Naive thymus-derived CD4-positive, alpha-beta T cell (primary cell): ENCODE measurements at regions of chr12 and their contacts with region 1.

Region 1: DNA sequence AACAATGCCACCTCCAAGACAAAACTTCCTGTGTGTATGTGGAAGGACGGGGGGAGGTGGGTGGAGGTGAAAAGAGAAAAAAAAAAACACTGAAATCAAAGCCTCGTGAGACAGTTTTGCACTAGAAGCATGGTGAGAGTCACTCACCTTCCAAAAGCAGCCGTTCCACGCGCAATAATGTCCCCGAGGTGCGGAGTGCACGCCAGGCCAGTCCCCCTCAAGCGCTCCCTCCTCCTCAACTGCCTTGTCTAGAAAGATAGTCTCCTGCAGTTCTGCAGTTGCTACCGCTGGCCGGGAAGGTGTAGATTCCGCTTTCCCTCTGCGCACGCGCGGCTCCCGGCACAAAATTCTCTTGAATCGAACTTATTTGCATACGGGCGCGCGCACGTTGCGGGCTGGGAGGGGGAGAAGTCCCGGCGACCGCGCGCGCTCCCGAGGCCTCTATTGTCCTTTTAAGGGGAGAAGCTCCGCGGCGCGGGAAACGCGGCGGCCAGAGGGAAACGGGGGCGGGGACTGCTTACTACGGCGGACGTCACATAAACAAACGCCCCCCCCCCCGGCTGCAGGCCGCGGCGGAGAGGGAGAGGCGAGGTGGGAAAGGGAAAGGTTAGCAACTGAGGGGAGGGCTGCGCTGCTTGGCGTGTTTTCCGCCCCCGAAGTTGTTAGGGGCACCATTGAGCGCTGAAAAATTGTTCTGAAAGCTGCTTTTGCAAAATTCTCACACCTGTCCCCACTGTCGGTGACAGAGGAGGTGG is at the start of gene SINHCAF:
- DNase-seq: peak; percentile 97 to 99 (median 98)
- ATAC-seq: peak; percentile 78
- H3K4me3 ChIP-seq: peak within 1 kb of the TSS; percentile 82
- H3K4me3 Mint-ChIP-seq: peak within 1 kb of the TSS; percentile 89 to 99 (median 96)
- H3K27ac ChIP-seq: peak within 1 kb of the TSS; percentile 93
- H3K27ac Mint-ChIP-seq: peak within 1 kb of the TSS; percentile 81 to 99 (median 93)
- H3K4me1 ChIP-seq: peaks cover 5 to 22% of the 10 kb centered on the region in 2 donors
- H3K4me1 Mint-ChIP-seq: peaks cover 20 to 37% (median 26%) of the 10 kb centered on the region in 7 donors
- H3K27me3 ChIP-seq: no peaks in the 10 kb centered on the region
- H3K27me3 Mint-ChIP-seq: peaks cover 0 to 17% (median 0%) of the 10 kb centered on the region in 5 donors
- total RNA-seq, gene SINHCAF: 80.5 to 114 (median 90.8) TPM

Region 2: GRCh38 chr12:30695199-30696103 is 630.6 kb before region 1 on chr12 and contains the start of gene IPO8:
- CTCF ChIA-PET with region 1: no interaction called
- POLR2A ChIA-PET with region 1: interaction called, 5 read pairs
- intact Hi-C with region 1: loop called (anchors 2 to 5 kb)
- DNase-seq: peak; percentile 61 to 83 (median 76)
- ATAC-seq: peak; percentile 97
- H3K4me3 ChIP-seq: peak within 1 kb of the TSS; percentile 94
- H3K4me3 Mint-ChIP-seq: peak within 1 kb of the TSS; percentile 93 to 100 (median 96)
- H3K27ac ChIP-seq: peak within 1 kb of the TSS; percentile 78
- H3K27ac Mint-ChIP-seq: peak within 1 kb of the TSS; percentile 91 to 98 (median 94)
- H3K4me1 ChIP-seq: peaks cover 22 to 28% of the 10 kb centered on the region in 2 donors
- H3K4me1 Mint-ChIP-seq: peaks cover 27 to 52% (median 45%) of the 10 kb centered on the region in 7 donors
- H3K27me3 ChIP-seq: no peaks in the 10 kb centered on the region
- H3K27me3 Mint-ChIP-seq: peaks cover 0 to 6% (median 4%) of the 10 kb centered on the region in 5 donors
- total RNA-seq, gene IPO8: 30.4 to 59.2 (median 44.4) TPM

Region 3: DNA sequence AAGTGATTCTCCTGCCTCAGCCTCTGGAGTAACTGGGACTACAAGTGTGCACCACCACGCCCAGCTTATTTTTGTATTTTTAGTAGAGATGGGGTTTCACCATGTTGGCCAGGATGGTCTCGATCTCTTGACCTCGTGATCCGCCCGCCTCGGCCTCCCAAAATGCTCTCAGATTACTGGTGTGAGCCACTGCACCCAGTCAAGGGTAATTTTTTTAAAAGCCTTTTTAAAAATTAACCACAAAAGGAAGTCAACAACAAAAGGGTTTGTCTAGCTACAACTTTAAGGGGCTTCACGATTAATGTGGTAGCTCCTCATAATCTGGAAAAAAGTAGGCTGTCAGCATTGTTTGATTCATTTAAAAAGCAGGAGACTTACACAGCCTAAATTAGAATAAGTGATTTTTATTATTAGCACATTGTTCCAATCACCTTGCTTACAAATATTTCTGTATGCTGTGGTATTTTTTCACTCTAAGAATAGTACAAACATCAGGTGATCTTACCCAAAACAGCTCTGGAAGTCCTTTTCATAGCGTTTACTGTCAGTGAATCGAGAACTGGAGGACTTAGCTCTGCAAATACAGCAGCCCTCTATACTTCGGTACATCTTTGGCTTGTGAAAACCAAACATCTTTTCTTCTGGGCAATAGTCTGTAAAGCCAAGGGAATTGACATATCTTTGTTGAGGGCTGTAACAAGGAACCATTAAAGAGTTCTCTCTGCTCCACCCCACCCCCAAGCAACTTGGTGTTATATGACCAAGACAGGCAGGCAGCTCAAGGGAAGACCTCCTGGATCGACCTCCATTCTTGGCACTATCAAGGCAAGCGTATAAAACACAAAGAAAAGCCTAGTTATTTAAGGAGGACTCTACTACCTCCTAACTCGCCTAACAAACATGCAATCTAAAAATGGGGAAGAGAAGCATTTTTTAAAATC is 28.2 kb before region 1 on chr12:
- CTCF ChIA-PET with region 1: interaction called, 3 read pairs
- POLR2A ChIA-PET with region 1: interaction called, 3 read pairs
- intact Hi-C with region 1: loop called in 1 of 2 experiments (anchors 2 kb)
- DNase-seq: no peak
- ATAC-seq: no peak
- H3K4me3 ChIP-seq: no peak overlapping the region
- H3K4me3 Mint-ChIP-seq: no peak overlapping the region
- H3K27ac ChIP-seq: peak overlapping the region; percentile 14
- H3K27ac Mint-ChIP-seq: peak overlapping the region in 6 of 9 donors; percentile 28 to 84 (median 54)
- H3K4me1 ChIP-seq: peaks cover 0 to 9% of the 10 kb centered on the region in 2 donors
- H3K4me1 Mint-ChIP-seq: peaks cover 11 to 35% (median 31%) of the 10 kb centered on the region in 7 donors
- H3K27me3 ChIP-seq: no peaks in the 10 kb centered on the region
- H3K27me3 Mint-ChIP-seq: no peaks in the 10 kb centered on the region

Region 4: GRCh38 chr12:31728917-31729640 is 403.0 kb after region 1 on chr12 and contains the start of gene AMN1:
- CTCF ChIA-PET with region 1: no interaction called
- POLR2A ChIA-PET with region 1: no interaction called
- intact Hi-C with region 1: loop called (anchors 1 to 2 kb)
- DNase-seq: peak; percentile 94 to 100 (median 95)
- ATAC-seq: peak; percentile 94
- H3K4me3 ChIP-seq: peak within 1 kb of the TSS; percentile 84
- H3K4me3 Mint-ChIP-seq: peak within 1 kb of the TSS; percentile 94 to 100 (median 98)
- H3K27ac ChIP-seq: peak within 1 kb of the TSS; percentile 86
- H3K27ac Mint-ChIP-seq: peak within 1 kb of the TSS; percentile 96 to 100 (median 99)
- H3K4me1 ChIP-seq: peaks cover 8 to 18% of the 10 kb centered on the region in 2 donors
- H3K4me1 Mint-ChIP-seq: peaks cover 26 to 79% (median 61%) of the 10 kb centered on the region in 7 donors
- H3K27me3 ChIP-seq: no peaks in the 10 kb centered on the region
- H3K27me3 Mint-ChIP-seq: peaks cover 0 to 2% (median 0%) of the 10 kb centered on the region in 5 donors
- total RNA-seq, gene AMN1: 4.1 to 22.9 (median 8.1) TPM

Region 5: DNA sequence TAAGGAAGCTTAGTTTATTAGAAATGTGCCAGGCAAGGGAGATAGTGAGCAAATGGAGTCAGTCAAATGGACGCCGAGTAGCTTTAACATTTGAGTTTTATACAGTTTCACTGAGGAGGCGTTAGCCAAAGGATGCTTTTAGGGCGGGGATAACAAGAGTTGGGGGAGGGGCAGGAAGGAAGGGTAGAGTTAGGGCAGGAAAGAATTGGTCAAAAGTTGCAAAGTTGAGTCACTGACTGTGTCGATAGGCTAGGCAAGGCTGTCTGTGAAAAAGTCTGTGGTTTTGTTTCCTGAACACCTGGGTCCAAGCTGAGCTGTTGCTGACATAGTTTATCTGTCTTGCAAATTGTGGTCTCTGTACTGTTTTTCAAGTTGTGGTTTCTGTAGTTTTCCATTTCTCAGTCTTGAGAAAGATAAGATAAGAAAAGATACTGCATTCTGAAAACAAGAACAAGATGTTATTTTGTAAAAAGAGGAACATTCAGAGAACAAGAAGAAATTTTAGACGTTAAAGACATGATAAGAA is 570.5 kb after region 1 on chr12:
- CTCF ChIA-PET with region 1: no interaction called
- POLR2A ChIA-PET with region 1: no interaction called
- intact Hi-C with region 1: loop called in 1 of 2 experiments (anchors 5 kb)
- DNase-seq: peak; percentile 35 to 96 (median 92)
- ATAC-seq: peak; percentile 97
- H3K4me3 ChIP-seq: no peak overlapping the region
- H3K4me3 Mint-ChIP-seq: peak overlapping the region; percentile 36 to 92 (median 76)
- H3K27ac ChIP-seq: peak overlapping the region; percentile 86
- H3K27ac Mint-ChIP-seq: peak overlapping the region; percentile 92 to 99 (median 97)
- H3K4me1 ChIP-seq: peaks cover 61% of the 10 kb centered on the region in 2 donors
- H3K4me1 Mint-ChIP-seq: peaks cover 33 to 74% (median 51%) of the 10 kb centered on the region in 7 donors
- H3K27me3 ChIP-seq: no peaks in the 10 kb centered on the region
- H3K27me3 Mint-ChIP-seq: peaks cover 0 to 6% (median 0%) of the 10 kb centered on the region in 5 donors

Region 6: DNA sequence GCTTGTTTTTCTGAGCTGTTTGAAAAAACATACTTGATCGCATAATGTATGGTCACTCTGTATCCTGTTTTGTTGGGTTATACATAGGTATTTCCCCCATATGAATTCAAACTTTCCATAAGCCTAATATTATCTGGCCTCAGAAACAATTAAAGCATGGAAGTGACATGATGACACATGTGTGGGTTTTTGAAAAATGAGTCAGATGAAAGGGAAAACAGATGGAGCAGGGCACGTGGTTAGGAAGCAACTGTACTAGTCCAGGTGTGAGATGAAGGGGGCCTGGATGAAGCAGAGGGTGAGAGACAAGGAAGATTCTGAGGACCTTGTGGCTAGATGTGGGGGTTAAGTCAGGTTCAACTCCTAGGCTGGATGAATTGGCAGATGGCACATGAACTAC is 1260.3 kb after region 1 on chr12:
- CTCF ChIA-PET with region 1: no interaction called
- POLR2A ChIA-PET with region 1: no interaction called
- intact Hi-C with region 1: loop called in 1 of 2 experiments (anchors 10 kb)
- DNase-seq: no peak
- ATAC-seq: no peak
- H3K4me3 ChIP-seq: no peak overlapping the region
- H3K4me3 Mint-ChIP-seq: peak overlapping the region in 2 of 10 donors; percentile 3 to 46
- H3K27ac ChIP-seq: no peak overlapping the region
- H3K27ac Mint-ChIP-seq: peak overlapping the region in 3 of 9 donors; percentile 1 to 63 (median 40)
- H3K4me1 ChIP-seq: peaks cover 0 to 9% of the 10 kb centered on the region in 2 donors
- H3K4me1 Mint-ChIP-seq: peaks cover 22 to 58% (median 33%) of the 10 kb centered on the region in 7 donors
- H3K27me3 ChIP-seq: no peaks in the 10 kb centered on the region
- H3K27me3 Mint-ChIP-seq: no peaks in the 10 kb centered on the region